Heart right ventricle (tissue), 16 donors: ENCODE measurements at regions of chr2 and their contacts with region 1.

Region 1: GRCh38 chr2:206971805-206972204 is 32.5 kb downstream of the CPO start:
- DNase-seq: no peak
- ATAC-seq: peak in 1 of 8 donors; percentile 53
- H3K4me3 ChIP-seq: no peak overlapping the region
- H3K27ac ChIP-seq: peak overlapping the region in 1 of 10 donors; percentile 15
- H3K4me1 ChIP-seq: peaks cover 0 to 31% (median 9%) of the 10 kb centered on the region in 9 donors
- H3K27me3 ChIP-seq: no peaks in the 10 kb centered on the region
- CTCF ChIP-seq: no peak

Region 2: GRCh38 chr2:206800506-206801417 is 171.0 kb before region 1 on chr2:
- intact Hi-C with region 1: loop called in 2 of 10 experiments (anchors 5 to 10 kb)
- DNase-seq: peak; percentile 21 to 75
- ATAC-seq: peak; percentile 51 to 86 (median 82)
- H3K4me3 ChIP-seq: peak overlapping the region in 4 of 10 donors; percentile 6 to 22 (median 17)
- H3K27ac ChIP-seq: no peak overlapping the region
- H3K4me1 ChIP-seq: peaks cover 0 to 32% (median 12%) of the 10 kb centered on the region in 9 donors
- H3K27me3 ChIP-seq: no peaks in the 10 kb centered on the region
- CTCF ChIP-seq: peak; percentile 50 to 82 (median 75)

Region 3: DNA sequence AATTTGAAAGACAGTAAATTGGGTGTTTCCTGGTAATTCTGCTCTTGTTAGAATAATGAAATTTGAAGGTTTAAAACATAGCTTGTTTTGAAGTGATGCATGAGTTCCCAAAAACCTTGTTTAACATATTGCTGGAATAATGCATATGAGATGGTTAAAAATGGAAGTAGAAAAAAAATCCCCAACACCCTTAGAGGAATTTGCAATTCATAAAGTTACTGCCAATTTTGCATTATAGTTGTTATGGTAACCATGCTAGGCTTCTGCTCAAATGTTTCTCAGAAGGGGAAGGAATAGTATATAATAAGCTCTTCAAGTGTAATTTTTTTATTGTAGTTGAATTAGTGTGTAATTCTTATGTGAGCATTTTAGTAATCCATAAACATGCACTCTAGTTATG is 157.3 kb before region 1 on chr2:
- intact Hi-C with region 1: loop called in 1 of 10 experiments (anchors 10 kb)
- DNase-seq: no peak
- ATAC-seq: no peak
- H3K4me3 ChIP-seq: no peak overlapping the region
- H3K27ac ChIP-seq: no peak overlapping the region
- H3K4me1 ChIP-seq: no peaks in the 10 kb centered on the region
- H3K27me3 ChIP-seq: no peaks in the 10 kb centered on the region
- CTCF ChIP-seq: no peak

Region 4: GRCh38 chr2:206915121-206915520 is 56.7 kb before region 1 on chr2:
- intact Hi-C with region 1: no loop called
- DNase-seq: no peak
- ATAC-seq: no peak
- H3K4me3 ChIP-seq: no peak overlapping the region
- H3K27ac ChIP-seq: no peak overlapping the region
- H3K4me1 ChIP-seq: peaks cover 0 to 6% (median 0%) of the 10 kb centered on the region in 9 donors
- H3K27me3 ChIP-seq: no peaks in the 10 kb centered on the region
- CTCF ChIP-seq: no peak

Region 5: GRCh38 chr2:206937555-206937954 is 34.2 kb before region 1 on chr2:
- intact Hi-C with region 1: no loop called
- DNase-seq: no peak
- ATAC-seq: no peak
- H3K4me3 ChIP-seq: no peak overlapping the region
- H3K27ac ChIP-seq: no peak overlapping the region
- H3K4me1 ChIP-seq: peaks cover 0 to 6% (median 0%) of the 10 kb centered on the region in 9 donors
- H3K27me3 ChIP-seq: no peaks in the 10 kb centered on the region
- CTCF ChIP-seq: no peak

Region 6: GRCh38 chr2:207008105-207008990 is 36.5 kb after region 1 on chr2:
- intact Hi-C with region 1: no loop called
- DNase-seq: no peak
- ATAC-seq: no peak
- H3K4me3 ChIP-seq: no peak overlapping the region
- H3K27ac ChIP-seq: no peak overlapping the region
- H3K4me1 ChIP-seq: no peaks in the 10 kb centered on the region
- H3K27me3 ChIP-seq: no peaks in the 10 kb centered on the region
- CTCF ChIP-seq: peak in 3 of 9 donors; percentile 13 to 23 (median 19)

Region 7: DNA sequence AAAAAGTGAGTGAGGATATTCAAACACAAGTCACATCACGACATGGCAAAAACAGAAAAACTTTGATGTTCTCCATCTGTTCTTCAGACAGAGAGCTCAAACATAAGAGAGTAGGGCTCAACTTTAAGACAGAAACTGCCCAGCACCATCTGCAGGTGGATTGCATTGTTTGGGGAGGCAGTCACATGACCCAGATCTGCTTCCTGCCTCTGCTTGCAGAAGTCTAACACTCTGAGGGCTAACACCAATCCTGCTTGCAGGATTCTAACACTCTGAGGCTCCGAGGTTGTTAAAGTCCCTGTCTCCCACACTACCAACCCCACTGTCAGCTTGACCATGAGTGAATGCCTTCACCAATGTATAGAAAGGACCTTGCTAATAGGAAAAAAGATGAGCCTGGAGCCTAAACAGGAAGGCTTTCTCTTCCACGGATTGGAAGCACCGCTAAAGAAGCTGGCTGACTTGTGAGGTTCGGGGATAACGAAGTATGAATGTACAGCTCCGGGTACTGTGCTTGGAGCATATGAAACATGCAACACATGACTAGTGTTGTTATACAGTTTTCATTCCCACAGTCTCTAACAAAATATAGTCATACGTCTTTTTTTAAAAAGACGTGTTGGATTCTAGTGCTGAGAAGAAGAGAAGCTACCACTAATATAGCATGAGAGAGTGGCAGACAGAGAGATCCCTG is 381.3 kb after region 1 on chr2:
- intact Hi-C with region 1: loop called in 1 of 10 experiments (anchors 10 kb)
- DNase-seq: no peak
- ATAC-seq: peak in 7 of 8 donors; percentile 14 to 73 (median 43)
- H3K4me3 ChIP-seq: no peak overlapping the region
- H3K27ac ChIP-seq: no peak overlapping the region
- H3K4me1 ChIP-seq: peaks cover 0 to 5% (median 0%) of the 10 kb centered on the region in 9 donors
- H3K27me3 ChIP-seq: no peaks in the 10 kb centered on the region
- CTCF ChIP-seq: peak in 5 of 9 donors; percentile 13 to 46 (median 27)